CD8-positive, alpha-beta T cell (primary cell): ENCODE measurements at regions of chr11 and their contacts with region 1.

Region 1: GRCh38 chr11:72238040-72238450 is 5.9 kb downstream of the PHOX2A start:
- DNase-seq: peak in 6 of 9 experiments; percentile 14 to 67 (median 52)
- ATAC-seq: peak; percentile 77
- H3K4me3 ChIP-seq: no peak overlapping the region
- H3K4me3 Mint-ChIP-seq: no peak overlapping the region
- H3K27ac ChIP-seq: no peak overlapping the region
- H3K27ac Mint-ChIP-seq: no peak overlapping the region
- H3K4me1 ChIP-seq: peaks cover 17% of the 10 kb centered on the region
- H3K4me1 Mint-ChIP-seq: peaks cover 23% of the 10 kb centered on the region
- H3K27me3 ChIP-seq: peaks cover 22 to 34% of the 10 kb centered on the region in 2 experiments
- H3K27me3 Mint-ChIP-seq: peaks cover 30% of the 10 kb centered on the region
- CTCF ChIP-seq: peak; percentile 41

Region 2: DNA sequence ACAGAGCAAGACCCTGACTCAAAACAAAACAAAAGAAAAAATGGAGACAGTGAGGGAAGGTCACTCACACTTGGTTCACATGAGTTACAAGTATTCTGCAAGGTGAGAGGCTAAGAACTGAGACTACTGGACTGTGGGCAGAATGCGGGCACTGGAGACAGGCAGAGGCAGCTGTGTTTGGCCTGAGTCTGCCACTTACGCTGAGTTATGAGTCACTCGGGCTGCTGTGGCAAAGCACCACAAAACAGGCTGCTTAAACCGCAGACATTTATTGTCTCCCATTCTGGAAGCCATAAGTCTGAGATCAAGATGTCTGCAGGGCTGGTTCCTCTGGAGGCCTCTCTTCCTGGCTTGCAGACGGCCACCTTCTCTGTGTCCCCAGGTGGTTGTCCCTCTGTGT is 1108.4 kb before region 1 on chr11:
- CTCF ChIA-PET with region 1: no interaction called
- POLR2A ChIA-PET with region 1: no interaction called
- intact Hi-C with region 1: no loop called
- DNase-seq: no peak
- ATAC-seq: no peak
- H3K4me3 ChIP-seq: no peak overlapping the region
- H3K4me3 Mint-ChIP-seq: no peak overlapping the region
- H3K27ac ChIP-seq: no peak overlapping the region
- H3K27ac Mint-ChIP-seq: no peak overlapping the region
- H3K4me1 ChIP-seq: no peaks in the 10 kb centered on the region
- H3K4me1 Mint-ChIP-seq: no peaks in the 10 kb centered on the region
- H3K27me3 ChIP-seq: no peaks in the 10 kb centered on the region
- H3K27me3 Mint-ChIP-seq: peaks cover 6% of the 10 kb centered on the region
- CTCF ChIP-seq: no peak

Region 3: GRCh38 chr11:72179804-72180396 is 58.1 kb before region 1 on chr11:
- CTCF ChIA-PET with region 1: interaction called, 11 read pairs
- POLR2A ChIA-PET with region 1: no interaction called
- intact Hi-C with region 1: loop called in 1 of 2 experiments (anchors 5 kb)
- DNase-seq: no peak
- ATAC-seq: no peak
- H3K4me3 ChIP-seq: no peak overlapping the region
- H3K4me3 Mint-ChIP-seq: no peak overlapping the region
- H3K27ac ChIP-seq: no peak overlapping the region
- H3K27ac Mint-ChIP-seq: no peak overlapping the region
- H3K4me1 ChIP-seq: no peaks in the 10 kb centered on the region
- H3K4me1 Mint-ChIP-seq: peaks cover 2% of the 10 kb centered on the region
- H3K27me3 ChIP-seq: no peaks in the 10 kb centered on the region
- H3K27me3 Mint-ChIP-seq: peaks cover 8% of the 10 kb centered on the region
- CTCF ChIP-seq: no peak

Region 4: GRCh38 chr11:72189461-72190275 is 48.4 kb before region 1 on chr11:
- CTCF ChIA-PET with region 1: interaction called, 11 read pairs
- POLR2A ChIA-PET with region 1: no interaction called
- intact Hi-C with region 1: loop called in 1 of 2 experiments (anchors 5 kb)
- DNase-seq: no peak
- ATAC-seq: no peak
- H3K4me3 ChIP-seq: no peak overlapping the region
- H3K4me3 Mint-ChIP-seq: no peak overlapping the region
- H3K27ac ChIP-seq: no peak overlapping the region
- H3K27ac Mint-ChIP-seq: no peak overlapping the region
- H3K4me1 ChIP-seq: no peaks in the 10 kb centered on the region
- H3K4me1 Mint-ChIP-seq: no peaks in the 10 kb centered on the region
- H3K27me3 ChIP-seq: no peaks in the 10 kb centered on the region
- H3K27me3 Mint-ChIP-seq: no peaks in the 10 kb centered on the region
- CTCF ChIP-seq: no peak

Region 5: DNA sequence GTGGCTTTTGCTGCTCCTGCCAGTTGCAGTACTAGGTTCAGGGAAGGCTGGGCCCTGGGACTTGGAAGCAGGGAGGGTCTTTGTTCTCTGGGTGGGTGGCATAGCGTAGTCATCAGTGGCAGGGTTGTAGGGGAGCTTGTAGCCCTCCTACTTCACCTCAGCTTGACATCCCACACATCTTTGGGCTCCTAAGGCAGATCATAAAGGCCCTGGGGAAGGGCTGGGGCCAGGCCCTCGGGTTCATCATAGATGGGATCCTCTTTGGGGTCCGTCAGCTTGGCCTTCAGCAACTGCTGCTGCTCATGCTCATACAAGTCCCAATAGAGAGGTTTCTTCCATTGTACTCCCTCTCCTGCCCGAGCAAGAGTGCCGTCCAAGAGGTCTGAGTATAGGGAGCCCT is 11.9 kb after region 1 on chr11:
- CTCF ChIA-PET with region 1: interaction called, 10 read pairs
- POLR2A ChIA-PET with region 1: interaction called, 4 read pairs
- intact Hi-C with region 1: no loop called
- DNase-seq: no peak
- ATAC-seq: no peak
- H3K4me3 ChIP-seq: no peak overlapping the region
- H3K4me3 Mint-ChIP-seq: no peak overlapping the region
- H3K27ac ChIP-seq: no peak overlapping the region
- H3K27ac Mint-ChIP-seq: no peak overlapping the region
- H3K4me1 ChIP-seq: no peaks in the 10 kb centered on the region
- H3K4me1 Mint-ChIP-seq: no peaks in the 10 kb centered on the region
- H3K27me3 ChIP-seq: peaks cover 0 to 3% of the 10 kb centered on the region in 2 experiments
- H3K27me3 Mint-ChIP-seq: peaks cover 29% of the 10 kb centered on the region
- CTCF ChIP-seq: no peak

Region 6: DNA sequence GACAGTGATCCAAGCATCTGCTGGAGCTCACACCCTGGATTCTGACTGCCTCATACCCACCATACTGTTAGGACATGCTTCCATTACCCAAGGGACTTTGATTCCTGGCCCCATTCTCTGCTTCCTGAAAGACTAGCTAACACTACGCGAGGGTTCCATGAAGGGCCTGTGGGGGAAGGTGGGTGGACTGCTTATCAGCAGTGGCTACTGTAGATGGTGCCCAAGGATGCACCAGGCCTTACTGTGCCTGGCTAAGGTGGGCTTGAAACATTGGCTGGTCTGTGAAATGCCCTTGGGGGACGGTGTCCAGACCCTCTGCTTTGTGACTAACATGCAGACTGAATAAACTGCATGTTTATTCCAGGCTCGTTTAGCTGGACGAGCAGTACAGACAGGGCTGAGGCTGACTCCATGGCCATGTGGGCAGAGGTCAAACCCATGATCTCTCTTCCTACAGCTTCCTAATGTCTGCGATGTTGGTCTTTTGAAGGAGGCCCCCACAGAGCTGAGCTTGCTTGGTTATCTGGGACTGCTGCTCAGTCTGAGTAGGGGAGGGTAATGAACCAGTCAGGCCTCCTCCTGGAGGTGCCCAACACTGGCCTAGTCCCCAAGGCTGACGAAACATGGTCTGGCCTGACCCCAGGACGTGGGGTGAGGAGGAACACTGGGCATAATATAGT is 54.2 kb after region 1 on chr11:
- CTCF ChIA-PET with region 1: no interaction called
- POLR2A ChIA-PET with region 1: no interaction called
- intact Hi-C with region 1: no loop called
- DNase-seq: no peak
- ATAC-seq: no peak
- H3K4me3 ChIP-seq: no peak overlapping the region
- H3K4me3 Mint-ChIP-seq: no peak overlapping the region
- H3K27ac ChIP-seq: no peak overlapping the region
- H3K27ac Mint-ChIP-seq: no peak overlapping the region
- H3K4me1 ChIP-seq: no peaks in the 10 kb centered on the region
- H3K4me1 Mint-ChIP-seq: no peaks in the 10 kb centered on the region
- H3K27me3 ChIP-seq: no peaks in the 10 kb centered on the region
- H3K27me3 Mint-ChIP-seq: no peaks in the 10 kb centered on the region
- CTCF ChIP-seq: no peak

Region 7: DNA sequence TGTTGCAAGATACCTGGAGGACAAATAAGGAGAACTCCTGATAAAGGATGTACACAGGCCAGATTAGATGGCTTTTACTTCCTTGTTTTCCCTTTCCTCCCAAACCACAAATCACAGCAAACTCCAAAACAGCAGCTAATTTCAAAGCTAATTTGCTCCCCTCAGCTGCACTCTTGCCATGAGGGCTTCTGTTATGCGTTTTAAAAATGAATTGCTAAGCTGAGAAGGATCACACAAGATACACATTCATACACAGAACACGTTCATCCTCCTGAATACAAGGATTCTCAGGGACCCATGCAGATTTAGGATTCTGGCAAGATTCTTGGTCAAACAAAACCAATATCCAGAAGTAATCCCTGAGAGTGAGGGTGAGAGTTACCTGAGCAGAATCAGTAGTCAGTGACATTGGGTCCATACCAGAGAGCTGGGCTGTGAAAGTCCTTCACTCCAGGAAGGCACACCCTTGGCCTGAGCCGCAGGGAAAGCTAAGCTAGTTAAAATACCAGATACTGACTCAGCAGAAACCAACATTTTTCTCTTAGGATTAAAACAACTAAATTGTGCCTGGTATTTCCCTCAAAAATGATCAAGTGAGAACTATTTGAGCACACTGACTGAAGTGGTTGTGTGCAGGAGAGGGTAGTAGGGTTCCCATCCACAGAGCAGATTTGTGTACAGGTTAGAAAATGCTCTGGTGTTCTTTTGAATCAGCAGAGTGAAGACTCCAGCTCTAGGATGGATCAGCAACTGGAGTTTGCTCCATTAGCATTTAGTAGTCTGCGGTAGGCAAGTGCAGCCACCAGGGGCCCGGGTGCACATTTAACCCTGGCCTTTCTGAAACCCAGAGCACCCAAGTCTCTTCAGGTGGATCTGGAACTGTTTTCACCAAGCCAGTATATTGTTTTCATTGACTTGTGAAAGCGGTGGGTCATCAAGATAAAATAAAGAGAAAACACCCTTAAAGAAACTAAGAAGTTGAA is 296.8 kb after region 1 on chr11:
- CTCF ChIA-PET with region 1: no interaction called
- POLR2A ChIA-PET with region 1: no interaction called
- intact Hi-C with region 1: no loop called
- DNase-seq: no peak
- ATAC-seq: no peak
- H3K4me3 ChIP-seq: no peak overlapping the region
- H3K4me3 Mint-ChIP-seq: no peak overlapping the region
- H3K27ac ChIP-seq: no peak overlapping the region
- H3K27ac Mint-ChIP-seq: no peak overlapping the region
- H3K4me1 ChIP-seq: no peaks in the 10 kb centered on the region
- H3K4me1 Mint-ChIP-seq: no peaks in the 10 kb centered on the region
- H3K27me3 ChIP-seq: no peaks in the 10 kb centered on the region
- H3K27me3 Mint-ChIP-seq: peaks cover 14% of the 10 kb centered on the region
- CTCF ChIP-seq: no peak